ENCODE measurements at regions of chr17 and their contacts with region 1.

Region 1: DNA sequence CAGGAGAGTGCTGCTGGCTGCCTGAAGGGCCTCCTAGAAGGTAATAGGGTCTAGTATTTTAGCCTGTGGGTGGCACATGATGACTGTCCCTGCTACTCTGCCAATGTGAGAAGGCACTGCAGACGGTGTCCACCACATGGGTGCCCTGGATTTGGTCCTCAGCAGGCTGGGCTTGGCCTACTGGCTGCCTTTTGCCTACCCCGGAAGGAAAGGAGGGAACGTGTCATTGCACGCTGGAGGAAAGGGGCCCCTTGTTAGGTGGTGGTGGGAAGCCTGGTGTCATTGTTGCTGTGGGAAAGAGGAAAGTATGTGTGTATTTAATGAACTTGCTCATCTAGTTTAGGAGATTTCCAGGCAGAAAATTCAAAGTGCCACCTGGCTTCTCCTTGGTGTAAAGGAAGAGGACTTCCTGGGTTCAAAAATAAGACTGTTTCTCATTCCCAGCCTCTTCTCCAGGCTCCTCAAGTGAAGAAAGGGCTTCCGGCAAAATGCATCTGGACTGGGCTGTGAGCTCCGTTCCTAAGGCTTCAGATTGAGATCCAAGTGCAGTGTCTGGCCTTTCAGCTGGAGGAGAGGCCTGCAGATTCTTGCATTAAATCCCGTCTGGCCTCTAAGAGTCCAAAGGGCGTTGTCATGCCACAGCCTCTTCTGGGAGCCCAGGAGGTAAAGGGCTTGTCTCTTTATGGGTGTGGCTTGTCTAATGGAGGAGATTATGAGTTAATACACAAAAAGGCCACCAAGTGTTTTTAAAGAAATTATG is 55.1 kb downstream of the RPTOR start:
- DNase-seq: peak; percentile 87 to 92
- H3K4me3 ChIP-seq: no peak overlapping the region
- H3K4me3 Mint-ChIP-seq: peak overlapping the region; percentile 64
- H3K27ac Mint-ChIP-seq: peak overlapping the region; percentile 93
- H3K4me1 ChIP-seq: peaks cover 29% of the 10 kb centered on the region
- H3K4me1 Mint-ChIP-seq: peaks cover 45% of the 10 kb centered on the region
- H3K27me3 ChIP-seq: no peaks in the 10 kb centered on the region
- H3K27me3 Mint-ChIP-seq: no peaks in the 10 kb centered on the region
- CTCF ChIP-seq: no peak

Region 2: DNA sequence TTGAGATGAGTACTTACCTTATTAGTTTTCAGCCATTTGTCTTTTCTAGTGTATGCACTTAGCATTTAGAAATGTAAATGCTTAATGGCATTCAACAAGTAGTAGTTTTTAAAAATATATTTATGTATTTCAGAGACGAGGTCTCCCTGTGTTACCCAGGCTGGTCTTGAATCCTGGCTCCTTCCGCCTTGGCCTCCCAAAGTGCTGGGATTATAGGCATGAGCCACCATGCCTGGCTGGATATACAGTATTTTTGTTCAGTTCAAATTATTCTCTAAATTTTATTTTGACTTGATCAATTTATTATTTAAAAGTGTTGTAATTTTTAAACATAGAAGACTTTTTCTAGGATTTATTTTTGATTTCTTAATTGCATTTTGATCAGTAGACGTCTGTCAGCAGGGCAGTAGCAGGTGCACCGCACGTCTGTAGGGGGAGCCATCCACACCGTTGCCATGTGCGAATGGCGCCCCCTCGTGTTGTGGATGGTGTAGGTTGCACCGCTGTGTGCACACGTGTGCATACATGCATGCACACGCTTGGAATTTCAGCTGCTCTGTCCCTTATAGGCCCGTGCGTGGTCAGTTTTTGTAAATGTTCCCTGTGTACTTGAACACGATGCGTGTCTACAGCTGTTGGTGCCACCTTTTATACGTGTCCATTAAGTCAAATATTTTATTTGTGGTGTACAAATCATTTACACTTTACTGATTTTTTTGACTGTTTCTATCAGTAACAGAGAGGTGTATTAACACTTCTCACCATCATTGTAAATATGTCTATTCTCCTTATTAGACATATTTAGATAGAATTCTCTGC is 24.5 kb before region 1 on chr17:
- CTCF ChIA-PET with region 1: interaction called, 3 read pairs
- POLR2A ChIA-PET with region 1: no interaction called
- intact Hi-C with region 1: loop called (anchors 1 kb)
- DNase-seq: peak; percentile 85 to 92
- H3K4me3 ChIP-seq: no peak overlapping the region
- H3K4me3 Mint-ChIP-seq: no peak overlapping the region
- H3K27ac Mint-ChIP-seq: no peak overlapping the region
- H3K4me1 ChIP-seq: no peaks in the 10 kb centered on the region
- H3K4me1 Mint-ChIP-seq: peaks cover 15% of the 10 kb centered on the region
- H3K27me3 ChIP-seq: no peaks in the 10 kb centered on the region
- H3K27me3 Mint-ChIP-seq: no peaks in the 10 kb centered on the region
- CTCF ChIP-seq: peak; percentile 99 to 100

Region 3: GRCh38 chr17:80619535-80620312 is 20.0 kb after region 1 on chr17:
- CTCF ChIA-PET with region 1: no interaction called
- POLR2A ChIA-PET with region 1: no interaction called
- intact Hi-C with region 1: loop called (anchors 1 kb)
- DNase-seq: peak; percentile 60 to 62
- H3K4me3 ChIP-seq: no peak overlapping the region
- H3K4me3 Mint-ChIP-seq: peak overlapping the region; percentile 40
- H3K27ac Mint-ChIP-seq: peak overlapping the region; percentile 81
- H3K4me1 ChIP-seq: peaks cover 41% of the 10 kb centered on the region
- H3K4me1 Mint-ChIP-seq: peaks cover 29% of the 10 kb centered on the region
- H3K27me3 ChIP-seq: no peaks in the 10 kb centered on the region
- H3K27me3 Mint-ChIP-seq: no peaks in the 10 kb centered on the region
- CTCF ChIP-seq: no peak

Region 4: GRCh38 chr17:80716986-80717719 is 117.4 kb after region 1 on chr17:
- CTCF ChIA-PET with region 1: no interaction called
- POLR2A ChIA-PET with region 1: no interaction called
- intact Hi-C with region 1: no loop called
- DNase-seq: no peak
- H3K4me3 ChIP-seq: no peak overlapping the region
- H3K4me3 Mint-ChIP-seq: no peak overlapping the region
- H3K27ac Mint-ChIP-seq: no peak overlapping the region
- H3K4me1 ChIP-seq: no peaks in the 10 kb centered on the region
- H3K4me1 Mint-ChIP-seq: peaks cover 8% of the 10 kb centered on the region
- H3K27me3 ChIP-seq: no peaks in the 10 kb centered on the region
- H3K27me3 Mint-ChIP-seq: no peaks in the 10 kb centered on the region
- CTCF ChIP-seq: no peak

Region 5: DNA sequence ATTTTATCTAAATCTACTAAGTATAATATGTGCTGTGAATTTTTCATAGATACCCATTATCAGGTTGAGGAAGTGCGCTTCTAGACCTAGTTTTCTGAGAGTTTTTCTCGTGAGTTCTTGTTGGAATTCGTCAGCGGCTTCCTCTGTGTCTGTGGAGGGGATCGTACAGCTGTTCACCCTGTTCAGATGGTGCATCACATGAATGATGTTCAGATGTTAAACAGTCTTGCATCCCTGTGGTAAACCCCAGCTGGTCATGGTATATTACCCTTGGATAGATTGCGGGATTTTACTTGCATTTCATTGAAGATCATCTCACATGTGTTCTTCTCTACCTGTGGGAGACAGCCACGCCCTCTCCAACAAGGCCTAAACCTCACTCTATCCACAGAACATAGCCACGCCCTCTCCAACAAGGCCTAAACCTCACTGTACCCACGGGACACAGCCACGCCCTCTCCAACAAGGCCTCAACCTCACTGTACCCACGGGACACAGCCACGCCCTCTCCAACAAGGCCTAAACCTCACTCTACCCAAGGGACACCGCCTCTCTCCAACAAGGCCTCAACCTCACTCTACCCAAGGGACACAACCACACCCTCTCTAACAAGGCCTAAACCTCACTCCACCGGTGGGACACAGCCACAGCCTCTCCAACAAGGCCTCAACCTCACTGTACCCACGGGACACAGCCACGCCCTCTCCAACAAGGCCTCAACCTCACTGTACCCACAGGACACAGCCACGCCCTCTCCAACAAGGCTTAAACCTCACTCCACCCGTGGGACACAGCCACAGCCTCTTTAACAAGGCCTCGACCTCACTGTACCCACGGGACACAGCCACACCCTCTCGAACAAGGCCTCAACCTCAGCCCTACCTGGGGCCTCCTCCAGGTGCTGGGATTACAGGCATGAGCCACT is 211.7 kb after region 1 on chr17:
- CTCF ChIA-PET with region 1: no interaction called
- POLR2A ChIA-PET with region 1: no interaction called
- intact Hi-C with region 1: no loop called
- DNase-seq: peak in 1 of 2 experiments; percentile 28
- H3K4me3 ChIP-seq: no peak overlapping the region
- H3K4me3 Mint-ChIP-seq: no peak overlapping the region
- H3K27ac Mint-ChIP-seq: no peak overlapping the region
- H3K4me1 ChIP-seq: no peaks in the 10 kb centered on the region
- H3K4me1 Mint-ChIP-seq: no peaks in the 10 kb centered on the region
- H3K27me3 ChIP-seq: no peaks in the 10 kb centered on the region
- H3K27me3 Mint-ChIP-seq: no peaks in the 10 kb centered on the region
- CTCF ChIP-seq: no peak

Region 6: DNA sequence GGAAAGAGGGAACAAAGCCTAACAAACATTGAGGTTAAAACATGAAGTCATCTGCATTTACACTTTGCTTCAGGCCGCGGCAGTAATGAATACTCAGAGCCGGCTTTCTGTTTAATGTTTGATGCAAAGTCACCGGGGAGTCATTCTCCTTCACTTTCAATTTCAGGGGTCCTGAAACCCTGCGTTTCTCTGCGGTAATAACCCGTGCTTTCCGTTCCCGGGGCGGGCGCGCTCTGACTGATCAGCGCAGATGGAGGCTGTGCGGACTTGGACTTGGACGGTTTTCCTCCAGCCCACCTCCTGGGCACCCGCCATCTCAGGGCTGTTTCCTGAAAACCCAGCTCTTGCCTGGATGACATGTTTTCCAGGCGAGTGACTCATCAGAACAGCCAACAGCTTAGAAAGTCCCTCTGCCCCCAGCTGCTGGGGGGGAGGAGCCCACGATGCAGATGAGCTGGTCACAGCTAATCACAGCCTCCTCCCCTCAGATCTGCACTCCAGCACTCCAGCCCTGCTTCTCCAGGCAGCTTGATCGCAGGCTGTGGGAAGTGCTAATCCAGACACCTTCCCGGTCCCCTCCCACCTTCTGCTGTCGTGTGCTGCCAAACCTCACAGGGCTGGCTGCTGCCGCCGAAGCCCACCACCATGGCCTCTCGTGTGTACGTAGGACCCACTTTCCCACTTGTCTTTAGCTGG is 233.3 kb after region 1 on chr17:
- CTCF ChIA-PET with region 1: no interaction called
- POLR2A ChIA-PET with region 1: no interaction called
- intact Hi-C with region 1: no loop called
- DNase-seq: peak; percentile 89 to 91
- H3K4me3 ChIP-seq: peak overlapping the region; percentile 39
- H3K4me3 Mint-ChIP-seq: peak overlapping the region; percentile 77
- H3K27ac Mint-ChIP-seq: peak overlapping the region; percentile 98
- H3K4me1 ChIP-seq: peaks cover 15% of the 10 kb centered on the region
- H3K4me1 Mint-ChIP-seq: peaks cover 20% of the 10 kb centered on the region
- H3K27me3 ChIP-seq: no peaks in the 10 kb centered on the region
- H3K27me3 Mint-ChIP-seq: no peaks in the 10 kb centered on the region
- CTCF ChIP-seq: no peak

Measured in Caco-2 (cell line).